SK-N-SH (cell line): ENCODE measurements at regions of chr1 and their contacts with region 1.

Region 1: GRCh38 chr1:67561704-67562113 is 123.3 kb upstream of the GADD45A start:
- DNase-seq: peak; percentile 84
- H3K4me3 ChIP-seq: peak overlapping the region in 1 of 2 experiments; percentile 18; a peak in 1 of 4 replicates
- H3K27ac ChIP-seq: no peak overlapping the region
- H3K4me1 ChIP-seq: peaks cover 0 to 6% of the 10 kb centered on the region in 2 experiments; a peak in 1 of 4 replicates
- H3K27me3 ChIP-seq: no peaks in the 10 kb centered on the region
- CTCF ChIP-seq: peak; percentile 94
- EP300 ChIP-seq: no peak; a peak in 1 of 4 replicates
- RAD21 ChIP-seq: peak; percentile 96

Region 2: GRCh38 chr1:67535474-67535873 is 26.2 kb before region 1 on chr1:
- CTCF ChIA-PET with region 1: interaction called, 80 read pairs
- POLR2A ChIA-PET with region 1: no interaction called
- DNase-seq: peak; percentile 69
- H3K4me3 ChIP-seq: no peak overlapping the region
- H3K27ac ChIP-seq: no peak overlapping the region
- H3K4me1 ChIP-seq: no peaks in the 10 kb centered on the region; a peak in 1 of 4 replicates
- H3K27me3 ChIP-seq: no peaks in the 10 kb centered on the region
- CTCF ChIP-seq: peak; percentile 99
- EP300 ChIP-seq: no peak
- RAD21 ChIP-seq: peak; percentile 87

Region 3: GRCh38 chr1:67594764-67595163 is 33.1 kb after region 1 on chr1:
- CTCF ChIA-PET with region 1: interaction called, 10 read pairs
- POLR2A ChIA-PET with region 1: no interaction called
- DNase-seq: no peak
- H3K4me3 ChIP-seq: no peak overlapping the region
- H3K27ac ChIP-seq: no peak overlapping the region
- H3K4me1 ChIP-seq: peaks cover 0 to 12% of the 10 kb centered on the region in 2 experiments; a peak in 1 of 4 replicates
- H3K27me3 ChIP-seq: no peaks in the 10 kb centered on the region
- CTCF ChIP-seq: no peak
- EP300 ChIP-seq: no peak
- RAD21 ChIP-seq: no peak

Region 4: DNA sequence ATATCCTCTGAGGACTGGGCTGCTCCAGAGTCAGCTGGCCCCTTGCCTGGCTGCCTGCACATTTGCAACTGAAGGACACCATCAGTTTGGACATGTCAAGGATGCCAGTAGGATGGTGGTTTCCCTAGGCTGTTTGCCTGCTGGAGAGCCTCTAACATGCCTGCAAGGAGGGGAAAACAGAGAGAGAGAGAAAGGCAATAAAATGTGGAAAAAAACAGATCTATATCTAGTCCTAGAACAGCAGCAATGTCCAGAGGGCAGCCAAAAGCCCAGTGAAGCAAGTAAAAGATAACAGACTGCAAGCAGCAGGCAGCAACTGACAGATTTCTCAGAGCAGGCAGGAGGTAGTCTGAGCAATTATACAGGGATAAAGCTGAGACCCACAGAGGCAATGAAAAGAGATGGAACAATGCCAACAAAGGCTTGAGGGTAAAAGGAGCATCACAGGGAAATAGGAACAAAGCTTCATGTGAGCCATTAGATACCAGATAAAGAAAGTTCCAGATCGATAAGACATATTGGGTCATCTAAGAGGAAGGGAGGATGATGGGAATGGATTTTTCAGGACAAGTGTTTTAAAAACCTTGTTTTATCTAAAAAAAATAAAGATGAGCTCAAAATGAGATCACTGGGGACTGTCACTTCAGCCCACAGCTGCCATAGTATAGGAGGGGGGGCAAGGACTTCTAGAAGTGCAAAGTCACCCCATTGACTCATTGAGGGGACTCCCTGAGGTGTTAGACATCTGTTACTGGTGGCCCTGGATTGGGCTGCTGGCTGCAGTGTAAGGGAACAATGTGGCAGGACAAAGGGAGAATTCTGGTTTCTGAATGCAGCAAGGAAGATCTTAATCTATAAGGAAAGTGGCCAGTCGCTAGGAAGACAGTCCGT is 84.7 kb after region 1 on chr1:
- CTCF ChIA-PET with region 1: interaction called, 21 read pairs
- POLR2A ChIA-PET with region 1: interaction called, 3 read pairs
- DNase-seq: peak; percentile 61
- H3K4me3 ChIP-seq: 0 out of 4 replicates have a peak overlapping the region, but pooled peaks of 1 of the 2 experiments have one; percentile 5
- H3K27ac ChIP-seq: peak overlapping the region; percentile 56 to 97
- H3K4me1 ChIP-seq: peaks cover 18 to 39% of the 10 kb centered on the region in 2 experiments
- H3K27me3 ChIP-seq: no peaks in the 10 kb centered on the region
- CTCF ChIP-seq: no peak
- EP300 ChIP-seq: peak; percentile 16 to 95; a peak in 3 of 4 replicates
- RAD21 ChIP-seq: peak; percentile 36; the same call in 1 of the 2 replicates

Region 5: GRCh38 chr1:67685067-67685557 is 123.4 kb after region 1 on chr1 and contains the start of gene GADD45A:
- CTCF ChIA-PET with region 1: interaction called, 45 read pairs
- POLR2A ChIA-PET with region 1: interaction called, 11 read pairs
- DNase-seq: peak; percentile 95
- H3K4me3 ChIP-seq: peak within 1 kb of the TSS; percentile 87 to 98
- H3K27ac ChIP-seq: peak within 1 kb of the TSS; percentile 96 to 99
- H3K4me1 ChIP-seq: peaks cover 15 to 28% of the 10 kb centered on the region in 2 experiments; a peak in 3 of 4 replicates
- H3K27me3 ChIP-seq: no peaks in the 10 kb centered on the region
- CTCF ChIP-seq: no peak
- EP300 ChIP-seq: no peak; a peak in 1 of 4 replicates
- RAD21 ChIP-seq: no peak
- polyA plus RNA-seq, gene GADD45A: 106 and 164 TPM in 2 replicates

Region 6: DNA sequence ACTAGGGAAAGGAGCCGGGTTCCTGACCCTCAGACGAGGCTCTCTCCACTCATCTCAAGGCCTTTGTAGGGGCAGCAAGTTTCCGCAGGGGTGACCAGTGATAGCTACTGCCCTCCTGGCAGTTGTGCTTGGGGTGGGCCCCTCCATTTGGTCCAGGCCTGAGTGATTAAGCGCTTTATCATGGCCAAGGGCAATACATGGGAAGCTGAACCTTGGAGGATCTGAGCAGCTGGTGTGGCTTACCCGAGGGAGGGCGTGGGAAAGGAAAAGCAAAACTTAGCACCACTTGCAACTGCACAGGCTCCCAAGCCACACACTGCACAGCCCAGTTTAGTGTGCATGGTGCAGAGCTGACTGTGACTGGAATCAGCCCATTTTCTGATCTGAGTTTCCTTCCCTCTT is 171.0 kb after region 1 on chr1:
- CTCF ChIA-PET with region 1: interaction called, 18 read pairs
- POLR2A ChIA-PET with region 1: no interaction called
- DNase-seq: no peak
- H3K4me3 ChIP-seq: no peak overlapping the region
- H3K27ac ChIP-seq: peak overlapping the region in 1 of 2 experiments; percentile 59; a peak in 2 of 4 replicates
- H3K4me1 ChIP-seq: peaks cover 15 to 41% of the 10 kb centered on the region in 2 experiments; a peak in 3 of 4 replicates
- H3K27me3 ChIP-seq: no peaks in the 10 kb centered on the region
- CTCF ChIP-seq: no peak
- EP300 ChIP-seq: no peak
- RAD21 ChIP-seq: no peak

Region 7: GRCh38 chr1:67766141-67766978 is 204.7 kb after region 1 on chr1:
- CTCF ChIA-PET with region 1: interaction called, 216 read pairs
- POLR2A ChIA-PET with region 1: no interaction called
- DNase-seq: peak; percentile 35
- H3K4me3 ChIP-seq: peak overlapping the region; percentile 6 to 49; a peak in 3 of 4 replicates
- H3K27ac ChIP-seq: peak overlapping the region in 1 of 2 experiments; percentile 85; a peak in 3 of 4 replicates
- H3K4me1 ChIP-seq: peaks cover 8 to 13% of the 10 kb centered on the region in 2 experiments; a peak in 3 of 4 replicates
- H3K27me3 ChIP-seq: no peaks in the 10 kb centered on the region
- CTCF ChIP-seq: peak; percentile 91
- EP300 ChIP-seq: no peak
- RAD21 ChIP-seq: peak; percentile 82